Activated CD4-positive, alpha-beta memory T cell treated with anti-CD3 and anti-CD28 coated beads for 36 hours (primary cell): ENCODE measurements at regions of chr16 and their contacts with region 1.

Region 1: GRCh38 chr16:85615852-85616606 is 2.9 kb downstream of the GSE1 start:
- DNase-seq: peak; percentile 85
- H3K4me3 Mint-ChIP-seq: no peak overlapping the region
- H3K27ac Mint-ChIP-seq: no peak overlapping the region
- H3K4me1 Mint-ChIP-seq: peaks cover 26% of the 10 kb centered on the region
- H3K27me3 Mint-ChIP-seq: peaks cover 7% of the 10 kb centered on the region

Region 2: DNA sequence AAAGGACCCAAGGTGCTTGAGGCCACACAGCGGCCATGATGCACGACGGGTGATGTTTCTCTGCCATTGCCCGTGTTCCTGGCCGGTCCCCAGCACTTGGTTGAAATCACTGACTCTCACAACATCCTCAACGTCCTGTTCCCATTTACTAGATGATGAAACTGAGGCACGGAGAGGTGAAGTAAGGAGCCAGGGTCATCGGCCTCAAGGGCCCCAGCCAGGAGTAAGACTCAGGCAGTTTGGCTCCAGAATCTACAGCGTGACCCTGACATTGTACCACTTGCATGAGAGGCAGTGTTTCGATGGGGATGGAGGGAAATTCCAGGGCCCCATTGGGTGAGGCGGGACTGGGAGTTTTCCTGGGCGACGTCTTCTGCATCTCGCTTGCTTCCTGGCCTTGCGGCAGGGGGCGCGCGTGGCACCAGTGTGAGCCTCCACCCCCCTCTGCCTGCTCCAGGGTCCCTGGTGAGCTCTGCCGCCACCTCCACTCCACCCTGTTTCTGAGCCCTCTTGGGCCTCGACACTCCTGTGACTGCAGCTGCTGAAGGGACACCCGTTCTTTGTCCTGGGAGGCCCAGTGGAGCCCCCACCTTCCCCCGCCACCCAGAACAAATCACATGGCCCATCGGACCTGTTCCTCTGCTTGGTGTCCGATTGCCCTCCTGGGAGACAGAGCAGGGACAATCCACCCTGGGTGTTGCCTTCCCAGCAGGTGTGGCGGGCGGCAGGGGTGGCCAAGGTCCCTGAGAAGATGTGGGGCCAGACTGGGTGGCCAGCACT is 135.9 kb before region 1 on chr16:
- CTCF ChIA-PET with region 1: interaction called, 14 read pairs
- POLR2A ChIA-PET with region 1: no interaction called
- intact Hi-C with region 1: no loop called
- DNase-seq: peak; percentile 19
- H3K4me3 Mint-ChIP-seq: no peak overlapping the region
- H3K27ac Mint-ChIP-seq: no peak overlapping the region
- H3K4me1 Mint-ChIP-seq: no peaks in the 10 kb centered on the region
- H3K27me3 Mint-ChIP-seq: no peaks in the 10 kb centered on the region

Region 3: GRCh38 chr16:85554112-85554813 is 61.8 kb before region 1 on chr16:
- CTCF ChIA-PET with region 1: interaction called, 35 read pairs
- POLR2A ChIA-PET with region 1: interaction called, 15 read pairs
- intact Hi-C with region 1: no loop called
- DNase-seq: peak; percentile 92
- H3K4me3 Mint-ChIP-seq: peak overlapping the region; percentile 82
- H3K27ac Mint-ChIP-seq: peak overlapping the region; percentile 91
- H3K4me1 Mint-ChIP-seq: peaks cover 35% of the 10 kb centered on the region
- H3K27me3 Mint-ChIP-seq: no peaks in the 10 kb centered on the region

Region 4: DNA sequence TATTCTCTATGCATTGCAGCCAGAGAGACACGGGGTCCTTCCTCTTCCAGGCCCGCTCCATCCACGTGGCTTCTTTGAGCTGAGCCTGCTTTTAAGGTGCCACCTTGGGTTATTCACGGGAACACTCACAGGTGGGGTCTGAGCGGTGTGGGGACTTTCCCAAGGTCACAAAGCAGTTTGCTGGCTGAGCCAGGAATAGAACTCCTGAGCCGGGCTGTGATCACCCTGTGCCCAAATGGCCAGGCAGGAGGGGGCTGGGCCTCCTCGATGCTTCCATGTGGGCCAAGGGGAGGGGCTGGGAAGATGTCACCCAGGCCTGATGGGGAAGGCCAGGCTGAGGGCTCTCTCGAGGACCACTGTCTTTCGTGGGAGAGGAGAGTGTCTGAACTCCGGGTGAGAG is 16.0 kb before region 1 on chr16:
- CTCF ChIA-PET with region 1: interaction called, 16 read pairs
- POLR2A ChIA-PET with region 1: no interaction called
- intact Hi-C with region 1: no loop called
- DNase-seq: no peak
- H3K4me3 Mint-ChIP-seq: no peak overlapping the region
- H3K27ac Mint-ChIP-seq: no peak overlapping the region
- H3K4me1 Mint-ChIP-seq: peaks cover 2% of the 10 kb centered on the region
- H3K27me3 Mint-ChIP-seq: no peaks in the 10 kb centered on the region

Region 5: DNA sequence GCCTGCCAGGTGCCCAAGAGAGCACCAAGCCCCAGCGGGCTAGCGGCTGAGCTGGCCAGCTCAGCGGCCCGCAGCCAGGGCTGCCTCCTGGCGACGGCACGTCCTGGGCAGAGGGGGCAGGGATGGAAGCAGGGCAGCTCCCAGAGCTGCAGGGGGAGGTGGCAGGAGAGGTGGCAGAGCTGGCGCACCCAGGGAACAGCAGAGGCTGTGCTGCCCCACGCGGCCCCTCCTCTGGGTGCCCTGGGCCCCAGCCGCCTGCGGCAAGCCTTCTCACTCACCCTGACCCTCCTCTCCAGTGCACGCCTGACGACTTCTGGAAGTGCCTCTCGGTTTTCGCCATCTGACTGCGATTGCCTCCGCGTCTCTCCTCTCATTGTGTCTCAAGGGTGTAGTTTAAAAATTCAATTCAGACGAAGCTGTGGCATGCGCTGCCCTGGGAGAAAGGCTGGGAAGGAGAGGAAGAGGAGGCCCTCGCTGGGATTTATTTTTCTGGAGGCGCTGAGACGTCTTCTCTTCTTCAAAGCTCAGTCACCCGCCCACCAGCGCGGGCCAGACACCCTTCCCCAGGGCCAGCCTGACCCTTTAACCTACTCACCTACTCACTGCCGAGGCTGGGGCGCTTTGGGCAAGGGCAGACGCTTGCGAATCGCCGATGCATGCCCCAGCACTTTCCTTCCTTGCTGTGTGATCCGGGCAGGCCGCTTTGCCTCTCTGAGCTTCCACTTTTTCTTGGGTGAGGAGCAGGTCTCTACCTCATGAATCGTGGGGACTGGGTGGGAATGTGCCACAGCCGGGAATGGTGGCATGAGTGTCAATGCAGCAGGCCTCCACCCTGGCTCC is 22.0 kb after region 1 on chr16:
- CTCF ChIA-PET with region 1: interaction called, 11 read pairs
- POLR2A ChIA-PET with region 1: no interaction called
- intact Hi-C with region 1: no loop called
- DNase-seq: no peak
- H3K4me3 Mint-ChIP-seq: no peak overlapping the region
- H3K27ac Mint-ChIP-seq: no peak overlapping the region
- H3K4me1 Mint-ChIP-seq: no peaks in the 10 kb centered on the region
- H3K27me3 Mint-ChIP-seq: no peaks in the 10 kb centered on the region

Region 6: DNA sequence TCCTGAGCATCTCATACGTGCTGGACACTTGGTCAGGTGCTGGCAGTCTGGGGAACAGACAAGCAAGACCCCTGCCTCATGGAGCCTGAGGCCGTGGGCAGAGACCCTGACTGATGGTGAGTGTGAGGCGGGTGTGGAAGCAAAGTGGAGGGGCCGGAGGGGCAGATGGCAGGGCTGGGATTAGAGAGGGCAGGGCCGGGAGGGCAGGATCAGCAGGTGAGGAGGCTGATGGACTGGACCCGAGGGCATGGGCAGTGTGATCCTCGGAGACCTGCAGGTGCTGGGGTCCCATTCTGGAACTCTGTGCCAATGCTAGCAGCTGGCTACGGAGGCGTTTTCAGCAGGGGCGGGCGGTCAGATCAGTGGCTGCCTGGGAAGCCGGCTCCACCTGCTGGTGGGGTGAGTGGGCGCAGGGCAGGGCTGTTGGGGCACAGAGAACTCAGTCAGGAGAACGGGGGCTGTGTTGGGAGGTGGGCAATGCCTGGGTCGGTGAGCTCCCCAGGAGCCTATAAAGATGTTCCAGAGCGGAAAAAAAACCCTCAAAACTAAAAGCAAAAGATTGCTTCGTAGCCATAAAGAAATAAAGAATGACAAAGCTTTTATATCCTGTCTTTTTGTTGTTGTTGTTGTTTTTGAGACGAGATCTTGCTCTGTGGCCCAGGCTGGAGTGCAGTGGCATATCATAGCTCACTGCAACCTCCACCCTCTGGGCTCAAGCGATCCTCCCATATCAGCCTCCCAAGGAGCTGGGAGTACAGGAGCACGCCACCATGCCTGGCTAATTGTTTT is 143.8 kb after region 1 on chr16:
- CTCF ChIA-PET with region 1: no interaction called
- POLR2A ChIA-PET with region 1: no interaction called
- intact Hi-C with region 1: no loop called
- DNase-seq: peak; percentile 33
- H3K4me3 Mint-ChIP-seq: no peak overlapping the region
- H3K27ac Mint-ChIP-seq: no peak overlapping the region
- H3K4me1 Mint-ChIP-seq: peaks cover 11% of the 10 kb centered on the region
- H3K27me3 Mint-ChIP-seq: peaks cover 28% of the 10 kb centered on the region

Region 7: GRCh38 chr16:86072328-86073102 is 456.5 kb after region 1 on chr16:
- CTCF ChIA-PET with region 1: no interaction called
- POLR2A ChIA-PET with region 1: no interaction called
- intact Hi-C with region 1: no loop called
- DNase-seq: peak; percentile 57
- H3K4me3 Mint-ChIP-seq: no peak overlapping the region
- H3K27ac Mint-ChIP-seq: no peak overlapping the region
- H3K4me1 Mint-ChIP-seq: no peaks in the 10 kb centered on the region
- H3K27me3 Mint-ChIP-seq: peaks cover 20% of the 10 kb centered on the region

Region 8: GRCh38 chr16:86590501-86591144 is 974.6 kb after region 1 on chr16:
- CTCF ChIA-PET with region 1: no interaction called
- POLR2A ChIA-PET with region 1: no interaction called
- intact Hi-C with region 1: no loop called
- DNase-seq: no peak
- H3K4me3 Mint-ChIP-seq: no peak overlapping the region
- H3K27ac Mint-ChIP-seq: no peak overlapping the region
- H3K4me1 Mint-ChIP-seq: no peaks in the 10 kb centered on the region
- H3K27me3 Mint-ChIP-seq: peaks cover 25% of the 10 kb centered on the region